Natural killer cell (primary cell): ENCODE measurements at regions of chr19 and their contacts with region 1.

Region 1: DNA sequence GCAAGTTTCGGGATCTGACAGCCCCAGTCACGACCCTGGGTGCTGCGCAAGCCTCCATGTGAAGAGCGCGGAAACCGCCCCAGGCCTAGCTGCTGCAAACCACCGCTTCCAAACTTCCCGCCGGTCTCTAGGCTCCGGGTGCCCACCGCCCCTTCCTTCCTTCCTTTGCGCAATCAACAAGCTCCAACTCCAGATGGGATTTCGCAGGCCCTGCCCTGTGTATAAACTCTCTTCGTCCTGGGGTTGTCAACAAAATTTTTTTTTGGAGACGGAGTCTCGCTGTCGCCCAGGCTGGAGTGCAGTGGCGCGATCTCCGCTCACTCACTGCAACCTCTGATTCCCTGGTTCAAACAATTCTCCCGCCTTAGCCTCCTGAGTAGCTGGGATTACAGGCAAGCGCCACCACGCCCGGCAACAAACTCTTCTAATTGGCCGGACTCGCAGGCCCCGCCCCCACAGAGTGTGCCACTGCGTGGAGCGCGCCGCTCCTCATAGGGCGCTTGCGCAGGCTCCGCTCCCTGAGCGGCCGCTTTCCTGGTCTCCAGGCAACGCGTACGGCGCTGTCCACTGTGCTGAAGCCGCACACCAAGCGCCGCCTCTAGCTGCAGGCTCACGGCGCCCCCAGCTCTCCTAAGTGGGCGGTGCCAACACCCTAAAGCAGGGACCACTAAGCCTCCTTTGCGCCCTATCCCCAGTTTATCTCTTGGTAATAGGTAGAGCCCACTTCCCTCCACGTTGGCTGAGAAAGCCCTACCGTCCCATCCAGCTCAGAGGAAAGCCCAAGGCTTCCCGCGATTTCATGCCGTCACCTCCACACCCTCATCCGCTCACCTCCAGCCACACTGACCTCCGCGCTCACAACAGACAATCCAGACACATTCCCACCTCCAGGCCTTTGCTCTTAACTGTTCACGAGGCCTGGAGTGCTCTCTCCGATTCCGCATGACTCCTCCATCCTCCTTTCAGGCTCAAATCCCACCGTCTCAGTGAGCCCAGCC is 5.5 kb upstream of the QTRT1 start:
- DNase-seq: peak; percentile 81 to 94
- ATAC-seq: peak; percentile 93 to 98 (median 98)
- H3K4me3 ChIP-seq: no peak overlapping the region
- H3K4me3 Mint-ChIP-seq: peak overlapping the region; percentile 96
- H3K27ac ChIP-seq: no peak overlapping the region
- H3K27ac Mint-ChIP-seq: peak overlapping the region; percentile 43 to 88
- H3K4me1 ChIP-seq: peaks cover 16% of the 10 kb centered on the region
- H3K4me1 Mint-ChIP-seq: peaks cover 18 to 19% of the 10 kb centered on the region in 2 donors
- H3K27me3 ChIP-seq: peaks cover 4% of the 10 kb centered on the region
- H3K27me3 Mint-ChIP-seq: peaks cover 3 to 6% of the 10 kb centered on the region in 2 donors
- CTCF ChIP-seq: no peak

Region 2: GRCh38 chr19:10478903-10479384 is 216.8 kb before region 1 on chr19:
- intact Hi-C with region 1: loop called (anchors 2 kb)
- DNase-seq: peak; percentile 87 to 96
- ATAC-seq: peak; percentile 96 to 98 (median 97)
- H3K4me3 ChIP-seq: peak overlapping the region; percentile 8
- H3K4me3 Mint-ChIP-seq: peak overlapping the region; percentile 82
- H3K27ac ChIP-seq: no peak overlapping the region
- H3K27ac Mint-ChIP-seq: peak overlapping the region; percentile 85 to 92
- H3K4me1 ChIP-seq: peaks cover 21% of the 10 kb centered on the region
- H3K4me1 Mint-ChIP-seq: peaks cover 10% of the 10 kb centered on the region in 2 donors
- H3K27me3 ChIP-seq: no peaks in the 10 kb centered on the region
- H3K27me3 Mint-ChIP-seq: no peaks in the 10 kb centered on the region
- CTCF ChIP-seq: peak; percentile 85

Region 3: DNA sequence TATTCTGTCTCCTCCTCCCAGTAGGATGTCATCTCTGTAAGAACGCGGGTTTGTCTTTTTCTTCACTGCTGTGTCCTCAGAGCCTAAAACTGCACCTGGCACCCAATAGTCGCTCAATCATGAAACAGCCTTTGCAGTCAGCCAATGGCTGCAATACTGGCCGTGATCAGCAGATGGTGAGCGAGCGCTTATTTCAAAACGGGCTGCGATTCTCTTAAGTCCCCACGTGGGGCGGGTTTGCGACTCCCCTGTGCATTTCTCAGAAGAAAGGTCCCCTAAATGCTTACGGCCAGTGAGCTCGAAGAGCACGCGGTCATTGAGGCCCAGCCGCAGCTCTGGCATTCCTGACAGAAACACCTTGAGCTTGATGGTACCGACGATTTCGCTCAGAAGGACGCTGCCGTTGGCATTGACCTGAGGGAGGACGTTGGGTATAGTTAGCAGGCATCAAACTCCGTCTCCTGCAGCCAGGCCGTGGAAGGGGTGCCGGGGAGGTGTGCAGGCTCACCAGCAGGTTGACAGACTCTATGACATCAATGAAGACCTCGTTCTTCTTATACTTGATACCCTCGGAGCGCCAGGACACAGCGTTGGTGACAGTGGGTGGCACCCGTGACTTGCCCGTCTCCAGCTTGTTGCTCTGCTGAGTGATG is 114.6 kb before region 1 on chr19:
- intact Hi-C with region 1: loop called (anchors 1 kb)
- DNase-seq: peak; percentile 88 to 95
- ATAC-seq: peak; percentile 96 to 100 (median 99)
- H3K4me3 ChIP-seq: no peak overlapping the region
- H3K4me3 Mint-ChIP-seq: peak overlapping the region; percentile 4
- H3K27ac ChIP-seq: no peak overlapping the region
- H3K27ac Mint-ChIP-seq: no peak overlapping the region
- H3K4me1 ChIP-seq: peaks cover 27% of the 10 kb centered on the region
- H3K4me1 Mint-ChIP-seq: peaks cover 12 to 21% of the 10 kb centered on the region in 2 donors
- H3K27me3 ChIP-seq: no peaks in the 10 kb centered on the region
- H3K27me3 Mint-ChIP-seq: no peaks in the 10 kb centered on the region
- CTCF ChIP-seq: peak; percentile 97

Region 4: GRCh38 chr19:10717356-10718204 is 21.9 kb after region 1 on chr19 and contains the start of gene DNM2:
- intact Hi-C with region 1: no loop called
- DNase-seq: peak; percentile 96 to 99
- ATAC-seq: peak; percentile 82 to 94 (median 84)
- H3K4me3 ChIP-seq: peak within 1 kb of the TSS; percentile 76
- H3K4me3 Mint-ChIP-seq: peak within 1 kb of the TSS; percentile 98
- H3K27ac ChIP-seq: peak within 1 kb of the TSS; percentile 68
- H3K27ac Mint-ChIP-seq: peak within 1 kb of the TSS; percentile 92 to 95
- H3K4me1 ChIP-seq: peaks cover 53% of the 10 kb centered on the region
- H3K4me1 Mint-ChIP-seq: peaks cover 24 to 42% of the 10 kb centered on the region in 2 donors
- H3K27me3 ChIP-seq: no peaks in the 10 kb centered on the region
- H3K27me3 Mint-ChIP-seq: no peaks in the 10 kb centered on the region
- CTCF ChIP-seq: peak; percentile 65
- total RNA-seq, gene DNM2: 419 to 491 (median 428) TPM